WTC11 (cell line): ENCODE measurements at regions of chr15 and their contacts with region 1.

Region 1: DNA sequence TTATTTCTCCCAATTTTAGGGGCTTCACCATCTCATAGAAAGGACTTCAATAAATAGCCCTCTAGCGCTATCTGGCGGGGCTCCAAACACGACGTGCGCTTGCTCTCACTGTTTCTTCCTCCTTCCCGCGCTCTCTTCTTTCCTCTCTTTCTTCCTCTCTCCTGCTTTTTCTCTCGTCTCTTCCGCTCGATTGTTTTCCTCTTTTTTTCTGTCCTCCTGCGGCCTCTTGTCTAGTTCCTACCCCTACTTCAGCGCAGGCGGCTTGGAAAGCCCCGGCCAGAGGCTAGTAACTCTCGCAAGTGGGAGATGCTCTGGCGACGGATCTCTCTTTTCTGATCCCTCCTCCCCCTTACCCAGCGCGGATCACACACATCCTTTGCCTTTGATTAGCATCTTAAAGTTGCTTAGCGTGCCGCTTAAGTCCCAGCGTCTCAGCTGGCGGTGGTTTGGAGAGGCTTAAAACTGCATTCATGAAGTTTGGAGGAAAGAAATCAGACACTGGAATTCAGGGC is 6.2 kb upstream of the MEIS2 start:
- DNase-seq: peak; percentile 62
- ATAC-seq: peak; percentile 28
- H3K4me3 Mint-ChIP-seq: peak overlapping the region; percentile 79
- H3K27ac Mint-ChIP-seq: 0 out of 2 replicates have a peak overlapping the region, but pooled peaks have one; percentile 29
- H3K4me1 Mint-ChIP-seq: peaks cover 74% of the 10 kb centered on the region
- H3K27me3 Mint-ChIP-seq: peaks cover 97% of the 10 kb centered on the region
- CTCF ChIP-seq: peak; percentile 22; the same call in 1 of the 2 replicates

Region 2: DNA sequence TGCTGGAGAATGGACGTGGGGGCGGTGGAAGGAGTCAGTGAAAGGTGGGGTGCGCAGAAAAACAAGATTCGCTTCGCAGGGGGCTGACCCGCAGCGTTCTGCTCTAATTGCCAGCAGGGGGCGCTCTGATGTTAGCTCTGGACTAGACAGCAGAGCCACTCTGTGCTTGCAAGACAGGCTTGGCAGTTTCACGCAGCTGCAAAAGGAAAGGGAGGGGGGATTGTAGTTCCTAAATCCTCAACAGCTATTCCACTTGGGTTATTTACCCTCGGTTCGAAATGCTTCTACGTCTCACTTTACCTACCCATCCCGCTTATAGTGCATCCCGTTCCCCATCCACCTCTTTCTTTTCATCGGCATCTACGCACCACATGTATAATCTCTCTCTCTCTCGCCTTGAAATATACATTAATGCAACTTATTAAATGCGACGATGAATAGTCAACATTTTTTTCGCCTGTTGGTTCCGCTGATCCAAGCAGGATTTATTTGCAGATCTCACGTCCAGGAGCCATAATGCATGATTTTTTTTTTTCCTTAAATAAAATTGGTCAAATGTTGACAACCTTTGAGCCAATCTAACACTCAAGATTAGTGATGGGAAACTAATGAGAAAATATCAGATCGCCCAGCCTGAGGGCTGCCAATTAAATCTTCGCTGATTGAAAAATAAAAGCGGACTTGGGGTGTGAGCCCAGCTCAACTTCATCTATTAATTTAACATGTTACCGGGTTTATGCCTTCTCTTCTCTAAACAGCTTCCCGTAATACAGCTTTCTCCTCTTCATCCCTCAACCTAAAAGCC is 222.6 kb before region 1 on chr15:
- CTCF ChIA-PET with region 1: interaction called, 31 read pairs
- POLR2A ChIA-PET with region 1: interaction called, 3 read pairs
- DNase-seq: peak; percentile 92
- ATAC-seq: peak; percentile 33
- H3K4me3 Mint-ChIP-seq: peak overlapping the region; percentile 42
- H3K27ac Mint-ChIP-seq: no peak overlapping the region
- H3K4me1 Mint-ChIP-seq: peaks cover 86% of the 10 kb centered on the region
- H3K27me3 Mint-ChIP-seq: peaks cover 100% of the 10 kb centered on the region
- CTCF ChIP-seq: peak; percentile 87

Region 3: GRCh38 chr15:37061996-37062607 is 44.4 kb before region 1 on chr15:
- CTCF ChIA-PET with region 1: no interaction called
- POLR2A ChIA-PET with region 1: no interaction called
- DNase-seq: no peak
- ATAC-seq: no peak
- H3K4me3 Mint-ChIP-seq: no peak overlapping the region
- H3K27ac Mint-ChIP-seq: no peak overlapping the region
- H3K4me1 Mint-ChIP-seq: peaks cover 15% of the 10 kb centered on the region
- H3K27me3 Mint-ChIP-seq: no peaks in the 10 kb centered on the region
- CTCF ChIP-seq: no peak

Region 4: GRCh38 chr15:37181339-37181738 is 74.8 kb after region 1 on chr15:
- CTCF ChIA-PET with region 1: no interaction called
- POLR2A ChIA-PET with region 1: no interaction called
- DNase-seq: no peak
- ATAC-seq: no peak
- H3K4me3 Mint-ChIP-seq: no peak overlapping the region
- H3K27ac Mint-ChIP-seq: no peak overlapping the region
- H3K4me1 Mint-ChIP-seq: no peaks in the 10 kb centered on the region
- H3K27me3 Mint-ChIP-seq: no peaks in the 10 kb centered on the region
- CTCF ChIP-seq: no peak

Region 5: DNA sequence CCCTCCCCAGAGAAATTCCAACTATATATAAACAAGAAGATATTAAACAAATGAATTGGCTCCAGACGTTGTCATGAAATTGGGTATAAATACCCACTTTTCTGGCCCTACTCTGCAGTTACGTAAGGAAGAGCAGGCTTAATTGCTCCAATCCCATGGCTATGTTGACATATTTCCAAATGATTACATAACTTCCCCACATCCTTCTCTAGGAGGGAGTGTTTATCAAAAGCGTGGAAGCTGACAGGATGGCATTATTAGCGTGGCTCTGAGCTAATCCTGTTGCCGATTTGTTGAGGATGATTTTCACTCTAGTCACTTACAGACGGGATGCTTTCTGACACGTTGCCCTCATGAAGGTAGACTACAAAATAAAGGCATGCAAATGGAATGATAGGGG is 480.4 kb after region 1 on chr15:
- CTCF ChIA-PET with region 1: no interaction called
- POLR2A ChIA-PET with region 1: no interaction called
- DNase-seq: no peak
- ATAC-seq: no peak
- H3K4me3 Mint-ChIP-seq: no peak overlapping the region
- H3K27ac Mint-ChIP-seq: no peak overlapping the region
- H3K4me1 Mint-ChIP-seq: no peaks in the 10 kb centered on the region
- H3K27me3 Mint-ChIP-seq: no peaks in the 10 kb centered on the region; the same call in 1 of the 2 replicates
- CTCF ChIP-seq: no peak